ENCODE measurements at regions of chr15 and their contacts with region 1.

Region 1: GRCh38 chr15:38683382-38684242 is 119.0 kb upstream of the RASGRP1 start:
- DNase-seq: peak; percentile 65
- ATAC-seq: peak; percentile 93
- H3K4me3 ChIP-seq: no peak overlapping the region
- H3K27ac ChIP-seq: no peak overlapping the region
- H3K4me1 ChIP-seq: peaks cover under 1% of the 10 kb centered on the region
- H3K27me3 ChIP-seq: no peaks in the 10 kb centered on the region
- CTCF ChIP-seq: peak; percentile 86

Region 2: GRCh38 chr15:38474155-38474757 is 209.4 kb before region 1 on chr15:
- CTCF ChIA-PET with region 1: no interaction called
- POLR2A ChIA-PET with region 1: no interaction called
- intact Hi-C with region 1: loop called (anchors 1 kb)
- DNase-seq: peak; percentile 66
- ATAC-seq: peak; percentile 95
- H3K4me3 ChIP-seq: no peak overlapping the region
- H3K27ac ChIP-seq: no peak overlapping the region
- H3K4me1 ChIP-seq: no peaks in the 10 kb centered on the region
- H3K27me3 ChIP-seq: no peaks in the 10 kb centered on the region
- CTCF ChIP-seq: peak; percentile 80

Region 3: DNA sequence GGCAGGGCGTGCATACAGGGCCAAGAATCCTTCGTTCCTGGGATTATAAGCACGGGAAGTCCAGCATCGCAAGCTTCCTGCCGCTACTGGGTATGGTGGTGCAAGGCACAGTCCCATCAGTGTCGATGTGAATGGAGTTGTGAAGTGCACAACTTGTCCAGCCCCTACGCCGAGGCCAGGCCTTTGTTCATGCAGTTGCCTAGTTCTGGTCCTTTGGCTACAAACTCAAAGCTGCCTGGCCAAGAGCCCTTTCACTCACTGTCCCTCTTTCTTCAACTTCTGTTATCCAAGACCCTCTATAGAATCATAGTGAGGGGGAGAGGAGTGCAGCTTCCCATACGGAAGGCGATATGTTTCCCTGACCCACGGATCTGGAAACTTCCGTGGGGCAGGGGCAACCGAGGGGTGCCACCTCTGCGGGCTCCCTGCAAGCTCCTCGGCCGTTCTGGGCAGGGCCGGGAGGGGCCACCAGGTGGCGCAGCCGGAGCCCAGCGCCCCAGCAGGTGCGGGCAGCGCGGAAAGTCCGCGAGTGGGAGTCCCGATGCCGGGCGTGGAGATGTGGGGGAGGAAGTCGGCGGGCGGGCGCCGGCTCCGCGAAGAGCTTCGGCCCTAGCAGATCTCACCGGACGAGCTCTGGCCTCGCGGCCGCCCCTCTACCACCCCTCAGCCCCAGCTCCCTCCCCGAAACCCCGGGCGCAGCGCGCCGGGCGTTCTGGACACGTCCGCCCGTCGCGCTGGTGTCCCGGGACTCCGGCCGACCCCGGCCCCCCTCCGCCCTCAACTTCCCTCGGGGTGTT is 119.7 kb before region 1 on chr15:
- CTCF ChIA-PET with region 1: no interaction called
- POLR2A ChIA-PET with region 1: no interaction called
- intact Hi-C with region 1: loop called (anchors 2 kb)
- DNase-seq: peak; percentile 53
- ATAC-seq: peak; percentile 93
- H3K4me3 ChIP-seq: peak overlapping the region; percentile 65
- H3K27ac ChIP-seq: no peak overlapping the region
- H3K4me1 ChIP-seq: no peaks in the 10 kb centered on the region
- H3K27me3 ChIP-seq: peaks cover 55% of the 10 kb centered on the region
- CTCF ChIP-seq: peak; percentile 90

Region 4: GRCh38 chr15:38660738-38661137 is 22.9 kb before region 1 on chr15:
- CTCF ChIA-PET with region 1: interaction called, 10 read pairs
- POLR2A ChIA-PET with region 1: no interaction called
- intact Hi-C with region 1: no loop called
- DNase-seq: no peak
- ATAC-seq: no peak
- H3K4me3 ChIP-seq: no peak overlapping the region
- H3K27ac ChIP-seq: no peak overlapping the region
- H3K4me1 ChIP-seq: no peaks in the 10 kb centered on the region
- H3K27me3 ChIP-seq: peaks cover 29% of the 10 kb centered on the region
- CTCF ChIP-seq: no peak

Region 5: GRCh38 chr15:38809621-38810020 is 126.0 kb after region 1 on chr15:
- CTCF ChIA-PET with region 1: no interaction called
- POLR2A ChIA-PET with region 1: no interaction called
- intact Hi-C with region 1: no loop called
- DNase-seq: no peak
- ATAC-seq: no peak
- H3K4me3 ChIP-seq: no peak overlapping the region
- H3K27ac ChIP-seq: no peak overlapping the region
- H3K4me1 ChIP-seq: no peaks in the 10 kb centered on the region
- H3K27me3 ChIP-seq: no peaks in the 10 kb centered on the region
- CTCF ChIP-seq: no peak

Measured in PC-3 (cell line).